Mammary epithelial cell (primary cell): ENCODE measurements at regions of chr5 and their contacts with region 1.

Region 1: DNA sequence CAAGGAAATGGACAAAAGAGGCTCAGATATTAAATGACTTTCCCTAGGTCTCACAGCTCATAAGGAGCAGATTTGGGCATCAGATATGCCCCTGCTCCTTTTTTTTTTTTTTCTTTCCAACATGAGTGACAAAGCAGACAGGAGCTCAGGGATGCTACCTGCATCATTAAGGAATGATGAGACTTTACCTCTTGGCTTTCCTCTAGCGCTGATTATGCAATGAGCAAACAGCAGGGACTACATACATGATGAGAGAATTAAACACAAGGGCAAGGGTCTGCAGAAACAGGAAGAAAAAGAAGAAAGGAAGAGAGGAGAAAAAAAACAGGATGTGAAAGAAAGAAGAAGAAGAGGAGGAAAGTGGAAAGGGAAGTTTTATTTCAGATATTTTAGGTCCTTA is 179.9 kb downstream of the PPP2R2B start:
- DNase-seq: no peak
- H3K4me3 ChIP-seq: no peak overlapping the region
- H3K27ac ChIP-seq: no peak overlapping the region
- H3K4me1 ChIP-seq: peaks cover 16% of the 10 kb centered on the region
- H3K27me3 ChIP-seq: no peaks in the 10 kb centered on the region
- CTCF ChIP-seq: no peak

Region 2: DNA sequence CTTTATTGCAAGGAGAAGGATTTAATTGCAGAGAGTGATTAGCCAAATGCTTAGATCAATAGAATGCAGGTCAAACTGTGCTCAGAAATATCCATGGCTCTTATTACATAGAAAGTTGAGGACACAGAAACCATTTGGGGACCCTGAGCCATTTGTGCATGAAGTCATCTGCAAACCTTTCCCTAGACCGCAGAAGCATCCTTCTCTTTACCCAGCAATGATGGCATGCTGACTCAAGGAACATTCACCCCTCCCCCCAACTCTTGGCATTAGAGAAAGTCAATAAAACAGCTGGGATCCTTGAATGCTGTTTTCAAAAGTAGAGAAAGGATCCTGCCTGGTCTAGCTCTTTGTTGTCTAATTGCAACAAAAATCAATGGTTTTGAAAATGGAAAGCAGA is 106.4 kb after region 1 on chr5:
- CTCF ChIA-PET with region 1: interaction called, 18 read pairs
- dilution Hi-C with region 1: no loop called
- in situ Hi-C with region 1: no loop called
- intact Hi-C with region 1: no loop called
- DNase-seq: peak; percentile 52
- H3K4me3 ChIP-seq: no peak overlapping the region
- H3K27ac ChIP-seq: no peak overlapping the region
- H3K4me1 ChIP-seq: no peaks in the 10 kb centered on the region
- H3K27me3 ChIP-seq: peaks cover 2% of the 10 kb centered on the region
- CTCF ChIP-seq: no peak